BJ (cell line): ENCODE measurements at regions of chr2 and their contacts with region 1.

Region 1: GRCh38 chr2:196076778-196077568 is 8.3 kb upstream of the DNAH7 start:
- DNase-seq: no peak
- H3K4me3 ChIP-seq: no peak overlapping the region
- H3K27me3 ChIP-seq: no peaks in the 10 kb centered on the region
- CTCF ChIP-seq: no peak

Region 2: GRCh38 chr2:196059491-196059960 is 17.4 kb before region 1 on chr2:
- CTCF ChIA-PET with region 1: no interaction called
- POLR2A ChIA-PET with region 1: no interaction called
- DNase-seq: no peak
- H3K4me3 ChIP-seq: no peak overlapping the region
- H3K27me3 ChIP-seq: peaks cover 3% of the 10 kb centered on the region; the same call in 1 of the 2 replicates
- CTCF ChIP-seq: no peak

Region 3: GRCh38 chr2:196277002-196277401 is 200.0 kb after region 1 on chr2:
- CTCF ChIA-PET with region 1: interaction called, 46 read pairs
- POLR2A ChIA-PET with region 1: no interaction called
- DNase-seq: no peak
- H3K4me3 ChIP-seq: no peak overlapping the region
- H3K27me3 ChIP-seq: no peaks in the 10 kb centered on the region
- CTCF ChIP-seq: peak; percentile 62

Region 4: GRCh38 chr2:196291873-196292800 is 215.2 kb after region 1 on chr2:
- CTCF ChIA-PET with region 1: interaction called, 30 read pairs
- POLR2A ChIA-PET with region 1: no interaction called
- DNase-seq: no peak
- H3K4me3 ChIP-seq: no peak overlapping the region
- H3K27me3 ChIP-seq: no peaks in the 10 kb centered on the region
- CTCF ChIP-seq: no peak